IMR-90 (cell line): ENCODE measurements at regions of chr20 and their contacts with region 1.

Region 1: GRCh38 chr20:45842169-45842812 is 8.7 kb downstream of the SNX21 start:
- DNase-seq: peak; percentile 59
- ATAC-seq: peak; percentile 74
- H3K4me3 ChIP-seq: no peak overlapping the region
- H3K27ac ChIP-seq: no peak overlapping the region; the same call in 1 of the 2 replicates
- H3K4me1 ChIP-seq: no peaks in the 10 kb centered on the region
- H3K27me3 ChIP-seq: no peaks in the 10 kb centered on the region
- CTCF ChIP-seq: no peak
- POLR2A ChIP-seq: no peak
- RAD21 ChIP-seq: no peak

Region 2: GRCh38 chr20:45470262-45470931 is 371.9 kb before region 1 on chr20:
- CTCF ChIA-PET with region 1: no interaction called
- POLR2A ChIA-PET with region 1: no interaction called
- dilution Hi-C with region 1: no loop called
- in situ Hi-C with region 1: no loop called
- intact Hi-C with region 1: no loop called
- DNase-seq: no peak
- ATAC-seq: peak; percentile 90
- H3K4me3 ChIP-seq: peak overlapping the region; percentile 7; the same call in 1 of the 2 replicates
- H3K27ac ChIP-seq: no peak overlapping the region
- H3K4me1 ChIP-seq: no peaks in the 10 kb centered on the region; the same call in 1 of the 2 replicates
- H3K27me3 ChIP-seq: peaks cover 43% of the 10 kb centered on the region
- CTCF ChIP-seq: no peak
- POLR2A ChIP-seq: no peak
- RAD21 ChIP-seq: no peak

Region 3: DNA sequence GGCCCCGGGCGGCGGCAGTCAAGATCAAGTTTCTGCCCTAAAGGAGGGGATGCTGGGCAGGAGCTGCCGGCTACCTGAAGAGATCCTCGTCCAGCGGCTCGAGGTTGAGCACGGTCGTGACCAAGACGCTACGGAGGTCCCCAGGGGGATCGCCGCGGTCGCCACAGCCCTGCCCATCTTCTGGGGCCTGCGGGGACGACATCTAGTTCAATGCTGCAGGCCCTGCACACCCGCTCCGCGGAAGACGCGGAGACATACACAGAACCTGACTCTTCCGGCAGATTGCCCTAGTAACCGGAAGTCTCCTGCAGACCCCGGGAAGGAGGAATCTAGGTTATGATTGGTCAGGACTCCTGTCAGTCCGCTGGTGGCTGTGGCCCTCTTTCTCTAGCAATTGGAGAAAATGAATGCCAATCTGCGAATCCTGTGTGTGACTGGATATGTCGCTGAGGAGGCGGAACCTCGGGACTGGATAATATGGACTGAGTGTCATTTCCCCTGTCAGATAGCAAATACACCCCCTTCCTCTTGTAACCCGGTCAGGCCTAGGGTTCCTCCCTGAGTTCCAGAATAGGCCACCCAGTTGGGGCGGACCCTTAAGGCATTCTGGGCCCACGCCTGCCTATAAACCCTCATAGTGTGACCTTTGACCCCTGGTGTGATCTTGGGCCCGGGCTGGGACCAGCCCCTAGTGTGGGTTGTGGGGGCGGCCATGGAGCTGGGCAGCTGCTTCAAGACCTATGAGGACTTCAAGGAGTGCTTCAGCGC is 15.0 kb after region 1 on chr20 and contains the starts of genes ACOT8 and ZSWIM3:
- CTCF ChIA-PET with region 1: interaction called, 3 read pairs
- POLR2A ChIA-PET with region 1: no interaction called
- dilution Hi-C with region 1: no loop called
- in situ Hi-C with region 1: no loop called
- intact Hi-C with region 1: loop called (anchors 1 kb)
- DNase-seq: peak; percentile 100
- ATAC-seq: peak; percentile 99
- H3K4me3 ChIP-seq: peak within 1 kb of the TSS; percentile 77
- H3K27ac ChIP-seq: peak within 1 kb of the TSS; percentile 78
- H3K4me1 ChIP-seq: peaks cover 8% of the 10 kb centered on the region; the same call in 1 of the 2 replicates
- H3K27me3 ChIP-seq: no peaks in the 10 kb centered on the region
- CTCF ChIP-seq: no peak
- POLR2A ChIP-seq: 0 out of 2 replicates have a peak, but pooled peaks have one; percentile 18
- RAD21 ChIP-seq: no peak
- total RNA-seq, gene ACOT8: 27.8 and 29.8 TPM in 2 replicates
- total RNA-seq, gene ZSWIM3: 8.1 and 8.6 TPM in 2 replicates

Region 4: GRCh38 chr20:46270977-46271744 is 428.9 kb after region 1 on chr20:
- CTCF ChIA-PET with region 1: no interaction called
- POLR2A ChIA-PET with region 1: no interaction called
- dilution Hi-C with region 1: no loop called
- in situ Hi-C with region 1: no loop called
- intact Hi-C with region 1: no loop called
- DNase-seq: no peak
- ATAC-seq: no peak
- H3K4me3 ChIP-seq: no peak overlapping the region
- H3K27ac ChIP-seq: no peak overlapping the region
- H3K4me1 ChIP-seq: no peaks in the 10 kb centered on the region
- H3K27me3 ChIP-seq: peaks cover 18% of the 10 kb centered on the region
- CTCF ChIP-seq: no peak
- POLR2A ChIP-seq: no peak
- RAD21 ChIP-seq: no peak